Activated CD4-positive, alpha-beta T cell treated with anti-CD3 and anti-CD28 coated beads for 36 hours (primary cell): ENCODE measurements at regions of chr7 and their contacts with region 1.

Region 1: DNA sequence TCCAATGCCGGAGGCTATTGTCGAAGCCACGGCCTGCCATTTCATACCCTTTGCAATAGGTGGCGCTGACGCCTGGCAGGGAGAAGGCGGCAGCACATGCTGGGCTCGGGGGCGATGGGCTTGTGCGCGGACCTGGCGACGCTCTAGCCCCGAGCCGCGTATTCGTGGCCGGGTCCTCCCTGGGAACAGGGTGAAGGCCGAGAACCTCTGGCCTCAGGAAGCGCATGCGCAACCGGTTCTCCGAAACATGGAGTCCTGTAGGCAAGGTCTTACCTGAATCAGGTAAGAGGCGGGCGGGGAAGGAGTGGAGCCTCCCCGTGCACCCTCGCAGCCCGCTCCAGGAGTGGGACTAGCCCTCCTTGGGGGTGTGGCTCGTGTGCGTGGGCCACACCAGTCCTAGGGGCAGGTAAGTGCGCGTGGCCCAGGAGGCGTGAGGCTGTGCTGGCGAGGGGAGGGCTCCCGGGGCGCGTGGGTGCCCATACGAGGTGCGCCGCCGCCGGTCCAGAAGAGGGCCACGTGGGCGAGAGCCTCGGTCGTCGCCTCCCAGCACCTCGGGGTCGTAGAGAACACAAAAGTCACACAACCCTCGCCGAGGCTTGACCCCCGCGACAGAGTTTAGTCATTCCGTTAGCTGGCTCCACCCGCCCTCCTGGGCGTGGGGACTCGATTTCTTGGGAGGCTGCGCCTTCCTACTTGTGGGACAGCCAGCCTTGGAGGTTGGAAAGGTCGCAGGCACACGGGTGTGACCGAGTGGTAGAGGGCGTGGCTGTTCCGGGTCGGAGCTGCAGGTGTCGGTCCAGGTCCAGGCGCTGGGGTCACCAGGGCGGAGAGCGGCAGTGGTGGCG is 5.5 kb upstream of the MEST start:
- DNase-seq: peak; percentile 77
- ATAC-seq: peak; percentile 82
- H3K4me3 Mint-ChIP-seq: peak overlapping the region; percentile 61
- H3K27ac Mint-ChIP-seq: peak overlapping the region; percentile 43
- H3K4me1 Mint-ChIP-seq: peaks cover 24% of the 10 kb centered on the region
- H3K27me3 Mint-ChIP-seq: peaks cover 43% of the 10 kb centered on the region

Region 2: GRCh38 chr7:130234078-130234477 is 252.3 kb before region 1 on chr7:
- CTCF ChIA-PET with region 1: no interaction called
- POLR2A ChIA-PET with region 1: no interaction called
- intact Hi-C with region 1: no loop called
- DNase-seq: no peak
- ATAC-seq: no peak
- H3K4me3 Mint-ChIP-seq: no peak overlapping the region
- H3K27ac Mint-ChIP-seq: no peak overlapping the region
- H3K4me1 Mint-ChIP-seq: no peaks in the 10 kb centered on the region
- H3K27me3 Mint-ChIP-seq: no peaks in the 10 kb centered on the region

Region 3: DNA sequence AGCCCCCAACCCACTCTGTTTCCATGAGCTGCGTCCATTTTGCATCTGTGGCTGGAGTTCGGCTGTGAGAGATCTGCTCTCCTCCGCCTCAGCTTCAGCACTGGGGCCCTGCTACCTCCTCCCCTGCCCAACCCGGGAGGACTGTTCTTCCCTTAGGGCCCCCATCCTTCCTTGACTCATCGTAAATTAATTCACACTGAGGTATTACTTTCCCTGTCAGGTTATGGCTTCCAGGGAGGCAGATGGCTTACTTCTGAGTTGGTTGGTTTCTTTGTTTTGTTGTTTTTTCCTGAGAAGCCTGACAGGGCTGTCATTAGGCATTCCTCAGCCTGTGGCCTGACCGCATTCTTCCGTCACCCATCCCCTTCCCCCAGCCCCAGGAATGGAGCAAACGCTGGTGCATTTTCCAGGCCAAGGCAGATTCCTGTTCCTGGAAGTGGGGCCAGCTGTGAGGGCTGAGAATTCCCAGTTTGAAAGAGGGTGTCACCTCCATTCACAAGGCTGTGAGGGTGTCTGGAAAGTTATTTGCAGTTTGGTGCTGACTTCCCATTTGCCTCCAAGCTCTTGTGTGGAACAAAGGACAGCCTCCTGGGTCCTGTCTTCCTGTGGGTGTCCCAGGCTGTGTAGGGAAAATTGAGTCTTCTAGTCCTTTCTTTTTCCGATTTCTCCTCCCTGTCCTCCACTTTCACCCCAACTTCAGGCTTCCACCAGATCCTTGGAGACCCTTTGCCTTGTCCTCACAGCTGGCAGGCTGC is 130.0 kb before region 1 on chr7:
- CTCF ChIA-PET with region 1: no interaction called
- POLR2A ChIA-PET with region 1: no interaction called
- intact Hi-C with region 1: no loop called
- DNase-seq: no peak
- ATAC-seq: no peak
- H3K4me3 Mint-ChIP-seq: no peak overlapping the region
- H3K27ac Mint-ChIP-seq: peak overlapping the region; percentile 37
- H3K4me1 Mint-ChIP-seq: peaks cover 3% of the 10 kb centered on the region
- H3K27me3 Mint-ChIP-seq: no peaks in the 10 kb centered on the region

Region 4: GRCh38 chr7:130440527-130441365 is 45.6 kb before region 1 on chr7 and contains the start of gene CEP41:
- CTCF ChIA-PET with region 1: interaction called, 3 read pairs
- POLR2A ChIA-PET with region 1: no interaction called
- intact Hi-C with region 1: loop called in 1 of 2 experiments (anchors 2 kb)
- DNase-seq: peak; percentile 97
- ATAC-seq: peak; percentile 96
- H3K4me3 Mint-ChIP-seq: peak within 1 kb of the TSS; percentile 95
- H3K27ac Mint-ChIP-seq: peak within 1 kb of the TSS; percentile 99
- H3K4me1 Mint-ChIP-seq: peaks cover 49% of the 10 kb centered on the region
- H3K27me3 Mint-ChIP-seq: no peaks in the 10 kb centered on the region
- total RNA-seq, gene CEP41: 19.7 to 21.2 TPM